Activated CD8-positive, alpha-beta memory T cell treated with anti-CD3 and anti-CD28 coated beads, Interleukin-2, amount 10 ng/mL, durations not matched to agents 7 days and 5 days (primary cell): ENCODE measurements at regions of chr1 and their contacts with region 1.

Region 1: DNA sequence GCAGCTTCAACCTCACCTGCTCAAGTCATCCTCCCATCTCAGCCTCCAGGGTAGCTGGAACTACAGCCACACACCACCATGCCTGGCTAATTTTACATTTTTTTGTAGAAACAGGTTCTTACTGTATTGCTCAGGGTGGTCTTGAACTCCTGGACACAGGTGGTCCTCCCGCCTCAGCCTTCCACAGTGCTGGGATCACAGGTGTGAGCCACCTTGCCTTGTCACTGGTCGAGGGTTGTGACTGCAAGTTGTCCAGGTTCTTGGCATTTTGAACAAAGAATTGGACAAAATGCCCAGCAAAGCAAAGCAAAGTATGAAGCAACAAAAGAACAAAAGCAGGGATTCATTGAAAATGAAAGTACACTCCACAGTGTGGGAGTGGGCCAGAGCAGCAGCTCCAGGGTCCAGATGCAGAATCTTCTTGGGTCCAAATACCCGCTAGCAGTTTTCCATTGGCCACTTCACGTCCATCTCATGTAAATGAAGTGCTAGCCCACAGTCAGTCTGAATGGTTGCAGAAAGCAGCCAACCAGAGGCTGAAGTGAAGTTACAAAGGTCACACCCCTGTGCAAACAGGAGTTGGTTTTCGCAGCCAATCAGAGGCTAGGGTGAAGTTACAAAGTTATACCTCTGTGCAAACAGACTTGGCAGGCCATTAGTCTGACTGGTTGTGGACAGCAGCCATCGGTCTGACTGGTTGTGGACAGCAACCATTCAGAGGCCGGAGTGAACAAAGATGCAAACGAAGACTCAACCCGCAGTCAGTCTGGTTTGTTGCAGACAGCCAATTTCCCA is 109.5 kb upstream of the KIF26B start:
- DNase-seq: no peak
- ATAC-seq: no peak
- H3K4me3 Mint-ChIP-seq: no peak overlapping the region
- H3K27ac Mint-ChIP-seq: no peak overlapping the region
- H3K4me1 Mint-ChIP-seq: peaks cover 10% of the 10 kb centered on the region
- H3K27me3 Mint-ChIP-seq: peaks cover 2% of the 10 kb centered on the region

Region 2: DNA sequence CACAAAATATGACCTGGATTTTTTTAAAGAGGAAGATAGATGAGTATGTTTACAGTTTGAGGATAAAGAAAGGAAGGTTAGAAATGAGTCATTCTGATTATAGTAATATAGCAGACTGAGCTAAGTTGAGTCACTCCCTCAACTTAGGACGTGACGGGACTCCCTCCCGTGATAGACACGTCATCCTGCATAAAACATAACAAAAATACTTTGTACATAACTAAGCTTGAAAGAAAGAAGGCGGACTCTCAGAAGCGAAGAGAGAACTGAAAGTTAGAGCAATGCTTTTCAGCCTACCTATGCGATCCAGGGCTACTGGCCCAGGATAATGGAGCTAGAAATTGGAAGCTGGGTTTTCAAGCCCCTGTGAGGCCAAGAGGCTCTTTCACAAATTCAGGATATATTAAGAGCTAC is 445.3 kb before region 1 on chr1:
- CTCF ChIA-PET with region 1: interaction called, 20 read pairs
- DNase-seq: peak; percentile 77
- ATAC-seq: peak; percentile 98
- H3K4me3 Mint-ChIP-seq: peak overlapping the region; percentile 67
- H3K27ac Mint-ChIP-seq: peak overlapping the region; percentile 89
- H3K4me1 Mint-ChIP-seq: peaks cover 14% of the 10 kb centered on the region
- H3K27me3 Mint-ChIP-seq: peaks cover 9% of the 10 kb centered on the region

Region 3: DNA sequence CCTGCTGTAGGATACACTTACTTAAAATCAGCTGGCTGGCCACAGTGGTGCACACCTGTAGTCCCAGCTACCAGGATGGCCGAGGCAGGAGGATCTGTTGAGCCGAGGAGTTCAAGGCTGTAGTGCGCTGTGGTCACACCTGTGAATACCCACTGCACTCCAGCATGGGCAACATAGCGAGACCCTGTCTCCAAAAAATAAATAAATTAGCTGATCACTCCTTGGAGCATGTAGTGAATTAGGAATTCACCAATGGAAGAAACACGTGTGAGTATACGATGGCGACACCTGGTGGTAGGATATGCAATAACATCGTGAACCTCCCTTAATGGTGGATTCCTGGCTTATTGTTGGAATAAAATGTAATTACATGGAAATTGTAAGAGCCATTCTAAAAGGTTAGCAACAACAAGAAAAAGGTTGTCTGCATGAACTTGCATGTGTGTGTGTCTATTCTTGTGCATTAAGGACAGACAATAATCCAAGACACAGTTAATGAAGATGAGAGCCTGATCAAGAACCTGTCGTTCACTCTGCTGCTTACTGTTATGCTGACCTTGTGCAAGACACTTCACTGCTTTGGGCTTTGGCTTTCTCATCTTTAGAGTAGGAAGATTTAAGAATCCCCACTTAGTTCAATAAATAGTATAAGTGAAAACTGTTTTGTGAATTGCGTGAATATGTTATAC is 248.4 kb before region 1 on chr1:
- CTCF ChIA-PET with region 1: interaction called, 85 read pairs
- DNase-seq: peak; percentile 57
- ATAC-seq: no peak
- H3K4me3 Mint-ChIP-seq: no peak overlapping the region
- H3K27ac Mint-ChIP-seq: no peak overlapping the region
- H3K4me1 Mint-ChIP-seq: peaks cover 5% of the 10 kb centered on the region
- H3K27me3 Mint-ChIP-seq: peaks cover 13% of the 10 kb centered on the region

Region 4: DNA sequence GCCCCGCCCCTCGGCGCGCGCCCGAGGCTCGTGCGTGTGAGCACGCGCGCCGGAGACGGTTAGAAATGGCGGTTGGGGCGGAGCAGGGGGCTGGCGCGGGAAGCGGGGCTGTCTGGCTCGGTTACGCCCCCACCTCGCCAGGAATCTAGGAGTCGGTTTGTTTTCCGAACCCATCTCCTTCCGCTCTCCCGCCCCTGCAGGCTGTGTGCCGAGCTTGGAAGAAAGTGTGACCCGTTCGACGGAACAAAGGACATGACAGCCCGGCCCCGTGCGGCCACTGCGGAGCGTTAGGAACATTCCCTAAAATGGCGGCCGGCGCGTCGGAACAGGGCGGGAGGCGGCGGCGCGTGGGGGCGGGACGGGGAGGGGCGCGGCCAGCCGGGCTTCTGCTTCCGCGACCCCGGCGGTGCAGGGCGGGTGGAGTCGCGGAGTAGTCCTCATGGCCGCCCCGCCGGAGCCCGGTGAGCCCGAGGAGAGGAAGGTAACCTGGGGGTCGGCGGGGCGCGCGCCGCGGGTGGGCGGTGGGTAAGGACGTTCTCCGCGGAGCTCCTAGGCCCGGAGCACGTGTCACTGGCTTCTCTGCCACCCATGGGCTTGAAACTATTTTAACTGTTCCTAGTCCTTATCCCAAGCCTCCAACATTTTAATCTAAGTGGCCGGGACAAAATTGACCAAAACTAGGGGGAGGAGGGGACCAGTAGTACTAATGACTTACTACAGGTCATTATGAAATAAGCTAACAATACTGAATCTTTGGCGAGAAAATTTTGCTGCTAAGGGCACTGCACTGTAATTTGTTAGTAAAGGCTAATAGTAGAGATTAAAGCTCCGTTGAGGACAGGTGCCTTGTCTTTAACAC is 209.8 kb before region 1 on chr1 and contains the start of gene COX20:
- CTCF ChIA-PET with region 1: interaction called, 19 read pairs
- DNase-seq: peak; percentile 91
- ATAC-seq: peak; percentile 74
- H3K4me3 Mint-ChIP-seq: peak within 1 kb of the TSS; percentile 92
- H3K27ac Mint-ChIP-seq: peak within 1 kb of the TSS; percentile 100
- H3K4me1 Mint-ChIP-seq: peaks cover 54% of the 10 kb centered on the region
- H3K27me3 Mint-ChIP-seq: no peaks in the 10 kb centered on the region
- total RNA-seq, gene COX20: 21.6 to 26.3 TPM

Region 5: DNA sequence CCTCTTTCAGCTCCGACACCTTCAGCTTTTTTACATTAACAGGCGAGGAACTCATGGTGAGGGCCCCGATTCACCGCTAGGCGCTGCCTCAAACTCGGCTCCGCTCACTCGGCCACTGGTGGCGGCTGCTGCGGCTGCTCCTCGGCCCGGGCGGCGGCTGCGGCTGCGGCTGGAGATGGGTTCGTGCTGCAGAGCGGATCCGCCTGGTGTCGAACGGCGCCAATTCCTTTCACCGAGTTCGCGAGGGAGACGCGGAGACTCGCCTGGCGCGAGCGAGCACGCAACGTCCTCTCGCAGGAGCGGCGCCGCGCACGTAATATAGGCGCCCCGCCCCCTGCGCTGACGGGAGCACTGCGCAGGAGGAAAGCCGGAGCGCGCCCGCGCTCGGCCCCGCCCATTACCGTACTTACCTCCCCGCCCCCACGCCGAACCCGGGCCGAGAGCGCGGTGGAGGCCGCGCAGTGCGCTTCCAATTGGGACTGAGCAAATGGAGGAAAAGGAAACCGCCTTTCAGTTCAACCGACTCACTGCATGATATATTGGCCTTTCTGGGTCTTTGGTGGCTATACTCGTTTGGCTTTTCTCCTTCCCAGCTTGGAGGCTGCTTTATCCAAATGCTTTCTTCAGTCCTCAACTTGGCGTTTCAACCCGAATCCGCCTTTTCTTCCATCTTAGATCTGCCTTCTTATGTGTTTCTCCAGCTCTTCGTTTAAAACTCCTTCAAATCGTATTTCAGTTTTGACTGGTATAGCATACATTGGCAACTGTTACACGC is 180.8 kb before region 1 on chr1 and contains the start of gene HNRNPU:
- CTCF ChIA-PET with region 1: interaction called, 11 read pairs
- DNase-seq: peak; percentile 96
- ATAC-seq: peak; percentile 74
- H3K4me3 Mint-ChIP-seq: peak within 1 kb of the TSS; percentile 97
- H3K27ac Mint-ChIP-seq: peak within 1 kb of the TSS; percentile 99
- H3K4me1 Mint-ChIP-seq: peaks cover 42% of the 10 kb centered on the region
- H3K27me3 Mint-ChIP-seq: no peaks in the 10 kb centered on the region
- total RNA-seq, gene HNRNPU: 410 to 503 TPM

Region 6: GRCh38 chr1:244970661-244971551 is 74.4 kb before region 1 on chr1:
- CTCF ChIA-PET with region 1: interaction called, 13 read pairs
- DNase-seq: peak; percentile 94
- ATAC-seq: peak; percentile 81
- H3K4me3 Mint-ChIP-seq: peak overlapping the region; percentile 87
- H3K27ac Mint-ChIP-seq: peak overlapping the region; percentile 98
- H3K4me1 Mint-ChIP-seq: peaks cover 16% of the 10 kb centered on the region
- H3K27me3 Mint-ChIP-seq: no peaks in the 10 kb centered on the region

Region 7: DNA sequence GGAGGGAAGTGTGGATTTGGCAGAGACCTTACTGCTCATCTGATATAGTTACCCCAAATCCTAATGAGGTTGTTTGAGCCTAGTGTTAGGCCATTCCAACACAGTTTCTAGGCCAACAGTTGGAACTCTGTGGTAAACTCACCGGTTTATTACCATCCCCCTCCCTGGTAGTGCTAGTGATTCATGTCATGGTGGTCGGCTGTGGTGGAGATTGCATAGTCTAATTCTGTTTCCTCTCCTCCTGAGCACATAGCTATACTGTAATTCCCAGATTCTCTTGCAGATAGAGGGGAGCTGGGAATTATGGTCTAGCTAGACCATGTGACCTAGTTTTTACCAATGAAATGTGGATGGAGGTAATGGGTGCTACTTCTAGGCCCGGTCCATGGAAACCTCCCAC is 14.2 kb before region 1 on chr1:
- CTCF ChIA-PET with region 1: interaction called, 15 read pairs
- DNase-seq: no peak
- ATAC-seq: no peak
- H3K4me3 Mint-ChIP-seq: no peak overlapping the region
- H3K27ac Mint-ChIP-seq: no peak overlapping the region
- H3K4me1 Mint-ChIP-seq: peaks cover 11% of the 10 kb centered on the region
- H3K27me3 Mint-ChIP-seq: no peaks in the 10 kb centered on the region

Region 8: GRCh38 chr1:245322673-245323441 is 277.6 kb after region 1 on chr1:
- CTCF ChIA-PET with region 1: no interaction called
- DNase-seq: no peak
- ATAC-seq: no peak
- H3K4me3 Mint-ChIP-seq: no peak overlapping the region
- H3K27ac Mint-ChIP-seq: no peak overlapping the region
- H3K4me1 Mint-ChIP-seq: no peaks in the 10 kb centered on the region
- H3K27me3 Mint-ChIP-seq: peaks cover 3% of the 10 kb centered on the region